ENCODE measurements at regions of chr16 and their contacts with region 1.

Region 1: GRCh38 chr16:78099372-78100161 is at the start of gene WWOX:
- DNase-seq: peak; percentile 99
- H3K4me3 Mint-ChIP-seq: peak within 1 kb of the TSS; percentile 94
- H3K27ac Mint-ChIP-seq: peak within 1 kb of the TSS; percentile 98
- H3K4me1 Mint-ChIP-seq: peaks cover 34% of the 10 kb centered on the region
- H3K27me3 Mint-ChIP-seq: no peaks in the 10 kb centered on the region
- CTCF ChIP-seq: peak; percentile 99
- total RNA-seq, gene WWOX: 15.5 and 18.1 TPM in 2 replicates

Region 2: GRCh38 chr16:77675464-77676324 is 423.9 kb before region 1 on chr16:
- CTCF ChIA-PET with region 1: interaction called, 20 read pairs
- POLR2A ChIA-PET with region 1: no interaction called
- intact Hi-C with region 1: loop called (anchors 2 kb)
- DNase-seq: peak; percentile 78
- H3K4me3 Mint-ChIP-seq: no peak overlapping the region
- H3K27ac Mint-ChIP-seq: no peak overlapping the region
- H3K4me1 Mint-ChIP-seq: no peaks in the 10 kb centered on the region
- H3K27me3 Mint-ChIP-seq: peaks cover 7% of the 10 kb centered on the region
- CTCF ChIP-seq: peak; percentile 80

Region 3: DNA sequence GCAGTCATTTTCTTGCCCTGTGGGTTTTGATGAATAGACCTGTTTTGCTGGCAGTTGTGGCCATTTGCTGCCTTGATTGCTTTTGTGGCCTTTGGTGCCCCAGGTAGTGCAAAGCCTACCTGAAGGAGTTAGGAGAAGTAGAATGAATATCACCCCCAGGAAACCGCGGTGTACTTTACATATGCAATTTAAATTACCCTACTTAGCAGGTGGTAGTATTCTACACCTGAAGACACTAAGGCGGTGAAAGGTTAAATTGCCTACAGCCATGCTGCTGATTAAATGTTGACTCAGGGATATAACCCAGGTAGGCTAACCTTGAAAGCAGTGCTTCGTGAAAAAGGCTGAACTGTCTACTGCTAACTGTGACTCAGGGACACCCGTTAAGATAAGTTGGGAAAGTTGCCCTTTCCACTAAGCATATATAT is 27.3 kb before region 1 on chr16:
- CTCF ChIA-PET with region 1: interaction called, 14 read pairs
- POLR2A ChIA-PET with region 1: no interaction called
- intact Hi-C with region 1: no loop called
- DNase-seq: no peak
- H3K4me3 Mint-ChIP-seq: no peak overlapping the region
- H3K27ac Mint-ChIP-seq: no peak overlapping the region
- H3K4me1 Mint-ChIP-seq: no peaks in the 10 kb centered on the region
- H3K27me3 Mint-ChIP-seq: no peaks in the 10 kb centered on the region
- CTCF ChIP-seq: no peak

Region 4: DNA sequence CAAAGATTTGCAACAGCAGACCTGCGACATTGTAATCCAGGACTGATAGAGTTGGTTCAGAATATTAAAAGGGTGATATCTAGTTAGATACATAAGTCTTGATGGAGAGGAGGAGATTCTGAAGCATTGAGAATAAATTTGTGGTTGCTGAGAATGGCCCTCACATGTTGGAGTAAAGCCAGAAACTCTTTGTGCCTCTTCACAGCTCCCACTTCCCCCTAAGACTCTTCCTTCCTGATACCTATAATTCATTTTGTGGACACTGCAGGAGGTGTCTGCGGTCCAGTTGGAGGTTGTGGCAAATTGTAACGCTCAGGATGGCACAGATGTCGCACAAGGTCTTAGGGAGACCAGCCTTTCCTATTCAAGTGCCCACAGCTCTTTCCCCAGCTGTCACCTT is 17.4 kb after region 1 on chr16:
- CTCF ChIA-PET with region 1: interaction called, 26 read pairs
- POLR2A ChIA-PET with region 1: interaction called, 6 read pairs
- intact Hi-C with region 1: no loop called
- DNase-seq: no peak
- H3K4me3 Mint-ChIP-seq: no peak overlapping the region
- H3K27ac Mint-ChIP-seq: no peak overlapping the region
- H3K4me1 Mint-ChIP-seq: no peaks in the 10 kb centered on the region
- H3K27me3 Mint-ChIP-seq: no peaks in the 10 kb centered on the region
- CTCF ChIP-seq: no peak